MCF 10A (cell line): ENCODE measurements at regions of chr22 and their contacts with region 1.

Region 1: DNA sequence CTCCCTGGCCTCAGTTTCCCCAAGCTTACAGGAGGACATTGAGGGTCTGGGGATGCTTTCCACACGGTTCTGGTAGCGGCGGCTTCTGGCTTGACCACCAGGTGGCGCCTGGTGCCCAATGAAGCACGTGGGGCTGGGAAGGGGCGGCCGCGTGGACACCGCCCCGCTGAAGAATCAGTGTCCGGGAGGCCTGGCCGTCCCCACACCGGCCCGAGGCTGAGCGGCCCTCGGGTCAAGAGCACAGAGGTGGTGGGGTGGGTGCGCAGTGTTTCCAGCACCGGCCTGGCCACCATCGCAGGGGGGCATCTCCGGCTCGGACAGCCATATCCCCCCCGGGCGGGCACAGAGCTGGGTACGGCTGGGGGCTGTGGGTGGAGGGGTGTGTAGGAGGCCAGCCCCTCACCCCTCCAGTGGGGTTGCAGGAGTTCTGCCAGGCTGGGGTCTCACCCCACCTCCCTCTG is 27.8 kb upstream of the PPARA start:
- DNase-seq: peak; percentile 69
- H3K4me3 Mint-ChIP-seq: no peak overlapping the region
- H3K27ac Mint-ChIP-seq: no peak overlapping the region
- H3K4me1 Mint-ChIP-seq: peaks cover 5% of the 10 kb centered on the region
- H3K27me3 Mint-ChIP-seq: no peaks in the 10 kb centered on the region
- CTCF ChIP-seq: peak; percentile 79

Region 2: GRCh38 chr22:46296257-46297150 is 174.0 kb after region 1 on chr22 and contains the start of gene GTSE1:
- CTCF ChIA-PET with region 1: interaction called, 16 read pairs
- POLR2A ChIA-PET with region 1: no interaction called
- intact Hi-C with region 1: loop called (anchors 1 kb)
- DNase-seq: peak; percentile 98
- H3K4me3 Mint-ChIP-seq: peak within 1 kb of the TSS; percentile 86
- H3K27ac Mint-ChIP-seq: peak within 1 kb of the TSS; percentile 97
- H3K4me1 Mint-ChIP-seq: peaks cover 27% of the 10 kb centered on the region
- H3K27me3 Mint-ChIP-seq: no peaks in the 10 kb centered on the region
- CTCF ChIP-seq: no peak
- total RNA-seq, gene GTSE1: 12.7 and 19.9 TPM in 2 replicates

Region 3: GRCh38 chr22:46309526-46310085 is 187.1 kb after region 1 on chr22:
- CTCF ChIA-PET with region 1: interaction called, 157 read pairs
- POLR2A ChIA-PET with region 1: no interaction called
- intact Hi-C with region 1: loop called (anchors 1 kb)
- DNase-seq: no peak
- H3K4me3 Mint-ChIP-seq: no peak overlapping the region
- H3K27ac Mint-ChIP-seq: no peak overlapping the region
- H3K4me1 Mint-ChIP-seq: no peaks in the 10 kb centered on the region
- H3K27me3 Mint-ChIP-seq: no peaks in the 10 kb centered on the region
- CTCF ChIP-seq: no peak

Region 4: GRCh38 chr22:46317646-46318045 is 195.1 kb after region 1 on chr22:
- CTCF ChIA-PET with region 1: interaction called, 157 read pairs
- POLR2A ChIA-PET with region 1: interaction called, 3 read pairs
- intact Hi-C with region 1: loop called (anchors 1 kb)
- DNase-seq: no peak
- H3K4me3 Mint-ChIP-seq: no peak overlapping the region
- H3K27ac Mint-ChIP-seq: no peak overlapping the region
- H3K4me1 Mint-ChIP-seq: no peaks in the 10 kb centered on the region
- H3K27me3 Mint-ChIP-seq: no peaks in the 10 kb centered on the region
- CTCF ChIP-seq: no peak